Mammary epithelial cell (primary cell): ENCODE measurements at regions of chr14 and their contacts with region 1.

Region 1: DNA sequence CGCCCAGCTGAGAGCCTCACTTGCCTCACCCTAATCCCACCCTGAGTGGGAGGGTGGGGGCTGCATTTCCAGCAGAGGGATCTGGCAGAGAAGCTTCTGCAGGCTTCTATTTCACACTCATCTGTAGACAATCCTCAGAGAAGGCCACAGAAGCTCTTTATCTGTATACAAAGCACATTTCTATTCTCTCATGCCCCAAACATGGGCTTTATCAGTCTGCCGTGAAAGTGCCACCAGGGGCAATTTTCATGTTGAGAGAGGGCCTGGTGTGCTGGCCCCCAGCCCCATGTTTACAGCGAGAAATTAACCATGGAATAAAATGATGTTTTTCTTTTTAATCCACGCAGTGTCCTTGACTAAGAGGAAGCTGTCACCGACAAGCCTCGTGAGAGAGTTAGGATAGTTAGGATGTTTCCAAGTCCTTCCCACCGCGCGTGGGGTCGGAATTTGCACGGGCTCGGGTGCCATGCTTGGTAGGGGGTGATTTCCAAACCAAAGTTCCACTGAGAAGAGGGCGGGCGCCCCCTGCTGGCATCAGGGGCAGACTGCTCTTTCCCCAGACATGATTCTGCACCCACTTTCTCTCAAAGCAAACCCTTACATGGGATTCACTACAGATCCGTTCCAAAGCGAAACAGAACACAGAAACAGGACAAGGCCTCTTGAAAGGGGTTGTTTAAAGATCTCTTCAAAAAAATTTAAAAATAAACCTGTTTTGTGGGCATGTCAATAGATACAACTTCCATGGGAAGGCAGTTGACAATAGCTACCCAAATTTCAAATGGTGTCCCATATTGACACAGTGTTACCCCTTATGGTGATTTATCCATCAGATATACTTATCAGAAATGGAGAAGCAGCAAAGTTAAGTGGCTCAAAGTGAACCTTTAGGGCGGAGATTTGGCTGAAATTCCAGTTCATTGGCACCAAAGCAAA is 19.4 kb downstream of the BDKRB1 start:
- DNase-seq: peak; percentile 29
- H3K4me3 ChIP-seq: no peak overlapping the region
- H3K27ac ChIP-seq: no peak overlapping the region
- H3K4me1 ChIP-seq: peaks cover 10% of the 10 kb centered on the region
- H3K27me3 ChIP-seq: no peaks in the 10 kb centered on the region
- CTCF ChIP-seq: peak; percentile 97 to 99

Region 2: DNA sequence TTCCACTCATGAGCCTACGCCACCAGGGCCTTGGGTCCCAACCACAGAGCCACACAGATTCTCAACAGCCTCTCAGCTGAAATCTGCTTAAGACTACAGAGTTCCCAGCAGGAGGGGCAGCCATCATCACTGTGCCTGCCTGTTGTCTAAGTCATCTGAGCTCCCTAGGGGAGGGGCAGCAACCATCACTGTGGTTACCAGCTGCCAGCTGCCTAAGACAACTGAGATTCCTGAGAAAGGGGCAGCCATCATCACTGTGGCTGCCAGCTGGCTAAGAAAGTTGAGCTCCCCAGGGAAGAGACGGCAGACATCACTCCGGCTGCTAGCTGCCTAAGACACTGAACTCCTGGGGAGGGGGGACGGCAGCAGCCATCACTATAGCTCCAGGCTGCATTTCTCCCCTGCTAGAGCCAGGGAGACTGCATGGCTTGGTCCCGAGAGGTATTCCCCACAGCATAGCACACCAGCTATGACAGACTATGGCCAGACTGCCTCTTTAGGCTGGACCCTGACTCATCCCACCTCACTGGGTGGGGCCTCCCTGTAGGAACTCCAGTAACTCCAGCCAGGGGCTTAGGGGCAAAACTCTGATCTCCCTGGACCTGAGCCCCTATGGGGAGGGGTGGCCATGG is 273.5 kb before region 1 on chr14:
- CTCF ChIA-PET with region 1: no interaction called
- dilution Hi-C with region 1: no loop called
- in situ Hi-C with region 1: loop called in 1 of 2 experiments (anchors 10 kb)
- intact Hi-C with region 1: loop called (anchors 1 kb)
- DNase-seq: no peak
- H3K4me3 ChIP-seq: no peak overlapping the region
- H3K27ac ChIP-seq: no peak overlapping the region
- H3K4me1 ChIP-seq: no peaks in the 10 kb centered on the region
- H3K27me3 ChIP-seq: peaks cover 5% of the 10 kb centered on the region
- CTCF ChIP-seq: no peak

Region 3: GRCh38 chr14:96051642-96052540 is 223.6 kb before region 1 on chr14:
- CTCF ChIA-PET with region 1: no interaction called
- dilution Hi-C with region 1: no loop called
- in situ Hi-C with region 1: no loop called
- intact Hi-C with region 1: loop called (anchors 1 kb)
- DNase-seq: peak; percentile 19
- H3K4me3 ChIP-seq: no peak overlapping the region
- H3K27ac ChIP-seq: no peak overlapping the region
- H3K4me1 ChIP-seq: no peaks in the 10 kb centered on the region
- H3K27me3 ChIP-seq: peaks cover 4% of the 10 kb centered on the region
- CTCF ChIP-seq: peak; percentile 31 to 34